K562 (cell line): ENCODE measurements at regions of chr16 and their contacts with region 1.

Region 1: GRCh38 chr16:50671644-50672260 is 9.4 kb downstream of the SNX20 start:
- DNase-seq: peak; percentile 45 to 74 (median 67)
- ATAC-seq: peak; percentile 82
- H3K4me3 ChIP-seq: no peak overlapping the region
- H3K27ac ChIP-seq: no peak overlapping the region
- H3K4me1 ChIP-seq: no peaks in the 10 kb centered on the region; a peak in 1 of 5 replicates
- H3K27me3 ChIP-seq: peaks cover 0 to 8% of the 10 kb centered on the region in 2 experiments; a peak in 2 of 5 replicates
- CTCF ChIP-seq: peak; percentile 74 to 80 (median 77)
- EP300 ChIP-seq: no peak
- POLR2A ChIP-seq: no peak
- RAD21 ChIP-seq: peak; percentile 79 to 89

Region 2: DNA sequence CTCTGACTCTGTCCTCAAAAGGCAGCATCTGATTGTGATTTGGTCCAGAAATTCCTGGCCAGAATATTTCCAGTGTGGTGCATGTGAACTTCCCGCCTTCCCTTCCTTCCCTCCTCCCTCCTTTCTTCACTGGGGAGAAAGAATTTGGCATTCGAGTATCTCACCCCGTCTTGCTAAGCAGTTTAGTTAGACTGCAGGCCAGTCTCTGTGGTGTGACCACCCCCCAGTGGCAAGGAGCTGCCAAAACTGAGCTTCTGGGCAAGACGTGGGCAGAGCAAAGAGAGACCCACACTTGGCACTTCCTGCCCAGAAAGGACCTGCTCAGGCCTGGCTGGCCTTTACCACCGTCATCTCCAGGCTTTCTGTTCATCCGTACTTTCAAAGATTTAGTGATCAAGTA is 27.0 kb before region 1 on chr16:
- CTCF ChIA-PET with region 1: no interaction called
- POLR2A ChIA-PET with region 1: no interaction called
- in situ Hi-C with region 1: no loop called
- intact Hi-C with region 1: no loop called
- DNase-seq: no peak
- ATAC-seq: no peak
- H3K4me3 ChIP-seq: no peak overlapping the region
- H3K27ac ChIP-seq: no peak overlapping the region
- H3K4me1 ChIP-seq: no peaks in the 10 kb centered on the region
- H3K27me3 ChIP-seq: peaks cover 8 to 51% of the 10 kb centered on the region in 2 experiments
- CTCF ChIP-seq: peak in 2 of 3 experiments; percentile 17; a peak in 2 of 6 replicates
- EP300 ChIP-seq: no peak
- POLR2A ChIP-seq: no peak
- RAD21 ChIP-seq: no peak

Region 3: DNA sequence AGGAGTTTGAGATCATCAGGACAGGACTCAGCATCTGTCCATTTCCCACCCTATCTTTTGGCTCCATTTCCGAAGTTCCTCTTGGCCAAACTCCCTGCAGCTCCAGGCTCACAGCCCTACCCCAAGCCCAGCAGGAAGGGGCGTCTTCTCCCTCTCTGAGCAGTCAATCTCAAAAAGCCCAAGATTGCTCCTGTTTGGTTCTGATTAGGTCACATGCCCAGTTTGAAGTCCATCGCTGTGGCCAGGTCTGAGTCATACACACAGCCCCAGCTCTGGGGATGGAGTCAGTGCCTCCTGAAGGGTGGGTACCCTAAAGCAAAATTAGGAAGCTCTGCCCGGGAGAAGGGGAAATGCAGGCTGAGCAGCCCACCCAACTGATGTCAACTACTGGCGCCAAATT is 14.5 kb before region 1 on chr16:
- CTCF ChIA-PET with region 1: no interaction called
- POLR2A ChIA-PET with region 1: no interaction called
- in situ Hi-C with region 1: no loop called
- intact Hi-C with region 1: no loop called
- DNase-seq: no peak
- ATAC-seq: peak; percentile 53; the same call in 2 of the 3 replicates
- H3K4me3 ChIP-seq: no peak overlapping the region
- H3K27ac ChIP-seq: no peak overlapping the region
- H3K4me1 ChIP-seq: no peaks in the 10 kb centered on the region; a peak in 1 of 5 replicates
- H3K27me3 ChIP-seq: peaks cover 0 to 8% of the 10 kb centered on the region in 2 experiments; a peak in 1 of 5 replicates
- CTCF ChIP-seq: no peak
- EP300 ChIP-seq: no peak
- POLR2A ChIP-seq: no peak
- RAD21 ChIP-seq: no peak

Region 4: DNA sequence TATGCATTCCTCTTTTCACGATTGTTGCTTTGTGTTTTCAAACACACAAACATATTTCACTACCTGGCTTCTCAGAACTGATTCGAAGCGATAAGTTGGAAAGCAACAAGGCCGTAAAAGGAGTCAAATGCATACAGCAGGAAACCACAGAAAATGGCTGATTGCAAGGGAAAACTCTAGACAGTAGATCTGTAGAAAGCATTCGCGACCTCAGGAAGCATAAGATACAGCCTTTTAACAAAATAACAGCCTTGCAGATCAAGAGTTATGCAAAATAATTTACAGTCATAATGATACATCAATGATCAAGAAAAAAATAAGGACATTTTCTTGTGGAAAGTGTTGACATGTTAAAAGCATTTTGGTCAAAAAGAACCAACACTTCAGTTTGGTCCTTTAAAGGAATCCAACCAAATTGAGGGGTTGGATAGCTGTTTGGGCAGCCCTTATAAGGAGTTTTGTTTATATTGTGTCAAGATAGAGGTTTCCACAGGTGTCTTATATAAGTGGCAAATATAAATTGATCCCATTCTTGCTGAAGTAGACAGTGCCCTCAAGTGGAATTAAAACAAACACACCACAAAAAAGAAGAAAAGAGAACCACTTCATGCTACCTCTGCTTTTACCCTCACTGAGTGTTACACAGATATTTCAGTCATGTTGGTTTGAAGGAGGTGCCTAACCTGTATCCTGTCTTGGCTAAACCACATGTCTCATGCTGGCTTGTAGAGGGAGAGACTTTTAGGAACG is 75.6 kb after region 1 on chr16:
- CTCF ChIA-PET with region 1: no interaction called
- POLR2A ChIA-PET with region 1: no interaction called
- in situ Hi-C with region 1: no loop called
- intact Hi-C with region 1: loop called (anchors 5 kb)
- DNase-seq: no peak
- ATAC-seq: peak; percentile 44; the same call in 1 of the 3 replicates
- H3K4me3 ChIP-seq: no peak overlapping the region
- H3K27ac ChIP-seq: no peak overlapping the region
- H3K4me1 ChIP-seq: peaks cover 0 to 2% of the 10 kb centered on the region in 2 experiments; a peak in 1 of 5 replicates
- H3K27me3 ChIP-seq: no peaks in the 10 kb centered on the region
- CTCF ChIP-seq: peak in 1 of 3 experiments; percentile 56; a peak in 3 of 6 replicates
- EP300 ChIP-seq: no peak
- POLR2A ChIP-seq: no peak
- RAD21 ChIP-seq: peak in 1 of 2 experiments; percentile 49; a peak in 3 of 4 replicates

Region 5: DNA sequence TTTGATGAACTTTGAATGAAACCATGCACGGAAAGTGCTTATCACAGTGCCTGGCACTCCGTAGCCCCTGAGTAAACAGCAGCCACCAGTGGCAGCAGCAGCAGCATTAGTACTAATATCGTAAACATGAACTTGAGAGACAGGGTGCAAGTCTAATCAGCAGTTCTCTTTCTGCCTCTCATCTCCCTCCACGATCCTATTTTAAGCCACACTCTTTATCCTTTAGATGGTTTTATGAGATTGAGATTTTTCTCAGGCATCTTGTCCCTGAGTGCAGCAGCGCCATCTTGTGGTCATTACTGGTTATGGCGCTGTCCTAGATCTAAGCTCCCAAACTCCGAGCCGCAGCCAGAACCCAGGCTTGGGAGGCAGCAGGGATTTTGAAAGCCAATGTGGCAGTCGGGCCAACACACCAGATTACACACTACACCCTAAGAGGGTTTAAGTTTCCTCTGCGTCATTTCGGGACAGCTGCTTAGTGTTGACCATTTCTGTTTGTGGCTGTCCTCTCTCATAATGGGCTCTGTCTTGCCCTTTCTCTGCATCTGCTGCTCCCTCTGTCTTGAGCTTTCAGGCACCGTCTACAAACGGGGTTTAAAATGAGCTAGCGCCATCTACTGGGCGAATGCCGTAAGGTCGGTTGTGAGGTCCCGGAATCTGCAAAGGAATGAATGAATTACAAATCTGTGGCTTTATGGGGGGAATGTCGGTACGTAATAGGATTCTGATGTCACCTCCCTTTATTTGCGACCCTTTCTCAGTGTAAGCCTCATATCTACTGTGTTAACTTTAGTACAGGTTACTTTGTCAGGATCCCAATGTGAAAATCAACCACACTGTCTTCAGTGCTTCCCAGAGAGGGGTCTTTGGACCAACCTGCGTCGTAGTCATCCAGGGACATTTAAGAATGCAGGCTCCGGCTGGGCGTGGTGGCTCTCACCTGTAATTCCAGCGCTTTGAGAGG is 134.6 kb after region 1 on chr16:
- CTCF ChIA-PET with region 1: interaction called, 32 read pairs
- POLR2A ChIA-PET with region 1: no interaction called
- in situ Hi-C with region 1: loop called (anchors 5 kb)
- intact Hi-C with region 1: loop called (anchors 1 kb)
- DNase-seq: peak; percentile 75 to 81 (median 78)
- ATAC-seq: peak; percentile 95
- H3K4me3 ChIP-seq: no peak overlapping the region
- H3K27ac ChIP-seq: no peak overlapping the region
- H3K4me1 ChIP-seq: no peaks in the 10 kb centered on the region
- H3K27me3 ChIP-seq: peaks cover 2 to 18% of the 10 kb centered on the region in 2 experiments; a peak in 2 of 5 replicates
- CTCF ChIP-seq: peak; percentile 83 to 92 (median 90)
- EP300 ChIP-seq: no peak
- POLR2A ChIP-seq: no peak
- RAD21 ChIP-seq: peak; percentile 72 to 85